ENCODE measurements at regions of chr15 and their contacts with region 1.

Region 1: GRCh38 chr15:40121911-40122638 is 13.4 kb upstream of the BMF start:
- DNase-seq: no peak
- ATAC-seq: no peak
- H3K4me3 ChIP-seq: no peak overlapping the region
- H3K4me3 Mint-ChIP-seq: no peak overlapping the region
- H3K27ac ChIP-seq: no peak overlapping the region
- H3K27ac Mint-ChIP-seq: no peak overlapping the region
- H3K4me1 ChIP-seq: no peaks in the 10 kb centered on the region
- H3K4me1 Mint-ChIP-seq: no peaks in the 10 kb centered on the region
- H3K27me3 ChIP-seq: no peaks in the 10 kb centered on the region
- H3K27me3 Mint-ChIP-seq: no peaks in the 10 kb centered on the region
- CTCF ChIP-seq: no peak

Region 2: DNA sequence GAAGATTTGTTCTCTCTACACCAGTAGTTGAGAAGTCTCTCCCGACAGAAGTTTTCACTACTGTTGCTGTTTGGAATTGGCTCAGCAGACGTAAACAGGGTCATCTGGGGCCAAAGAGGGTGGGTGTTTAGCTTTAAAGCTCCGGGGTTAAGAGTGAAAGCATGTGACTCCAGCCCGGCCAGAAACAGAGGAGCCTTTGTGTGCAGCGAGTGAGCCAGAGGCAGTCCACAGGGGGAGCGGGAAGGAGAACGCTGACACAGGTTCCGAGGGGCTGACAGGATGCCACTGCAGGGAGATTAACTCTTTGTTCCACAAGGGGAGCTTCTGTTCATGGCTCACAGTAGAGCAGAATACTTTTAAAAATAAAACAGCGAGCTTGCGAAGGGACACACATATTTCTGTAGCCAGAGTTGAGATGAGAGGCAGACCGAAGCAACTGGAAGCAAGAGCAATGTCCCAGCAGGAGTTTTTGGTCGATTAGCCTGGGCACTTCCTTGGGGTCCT is 40.3 kb before region 1 on chr15:
- CTCF ChIA-PET with region 1: no interaction called
- POLR2A ChIA-PET with region 1: no interaction called
- intact Hi-C with region 1: loop called in 1 of 2 experiments (anchors 1 kb)
- DNase-seq: no peak
- ATAC-seq: peak; percentile 42
- H3K4me3 ChIP-seq: no peak overlapping the region
- H3K4me3 Mint-ChIP-seq: peak overlapping the region; percentile 69
- H3K27ac ChIP-seq: no peak overlapping the region
- H3K27ac Mint-ChIP-seq: no peak overlapping the region
- H3K4me1 ChIP-seq: peaks cover 16% of the 10 kb centered on the region
- H3K4me1 Mint-ChIP-seq: peaks cover 25% of the 10 kb centered on the region
- H3K27me3 ChIP-seq: peaks cover 0 to 2% of the 10 kb centered on the region in 2 experiments
- H3K27me3 Mint-ChIP-seq: peaks cover 30% of the 10 kb centered on the region
- CTCF ChIP-seq: no peak

Region 3: DNA sequence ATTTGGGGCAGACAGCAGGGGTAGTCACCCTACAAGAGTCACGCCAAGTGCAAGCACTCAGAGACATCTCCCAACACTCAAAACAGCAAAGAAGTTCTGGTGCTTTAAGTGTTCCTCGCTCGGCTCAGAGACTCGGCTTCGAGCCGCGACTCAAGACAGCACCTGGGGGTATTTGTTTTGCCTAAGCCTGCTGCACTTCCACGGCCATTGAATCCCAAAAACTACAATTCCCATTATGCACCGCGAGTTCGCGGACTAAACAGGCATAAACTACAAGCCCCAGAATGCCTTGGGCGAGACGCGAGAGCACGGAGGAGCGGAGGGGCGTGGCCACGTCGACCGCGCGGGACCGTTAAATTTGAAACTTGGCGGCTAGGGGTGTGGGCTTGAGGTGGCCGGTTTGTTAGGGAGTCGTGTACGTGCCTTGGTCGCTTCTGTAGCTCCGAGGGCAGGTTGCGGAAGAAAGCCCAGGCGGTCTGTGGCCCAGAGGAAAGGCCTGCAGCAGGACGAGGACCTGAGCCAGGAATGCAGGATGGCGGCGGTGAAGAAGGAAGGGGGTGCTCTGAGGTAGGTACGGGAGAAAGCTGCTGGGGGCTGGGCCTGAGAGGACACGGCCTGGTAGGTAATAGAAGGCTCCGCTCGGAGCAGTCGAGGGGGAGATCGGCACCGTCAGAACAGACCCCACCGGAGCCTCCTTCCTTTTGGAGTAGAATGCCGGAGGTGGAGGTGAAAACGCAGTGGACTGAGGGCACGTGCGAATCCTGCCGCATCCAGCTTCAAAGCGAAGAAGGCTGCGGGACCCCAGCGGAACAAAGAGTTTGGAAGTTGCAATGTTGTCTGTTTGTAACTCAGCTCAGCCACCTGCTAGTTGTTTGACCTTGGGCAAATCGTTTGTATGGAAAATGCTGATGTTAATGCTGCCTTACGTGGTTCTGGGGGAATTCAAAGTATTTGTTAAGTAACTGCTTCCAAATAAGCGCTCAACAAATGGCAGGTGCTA is 38.9 kb after region 1 on chr15 and contains the start of gene BUB1B:
- CTCF ChIA-PET with region 1: no interaction called
- POLR2A ChIA-PET with region 1: no interaction called
- intact Hi-C with region 1: no loop called
- DNase-seq: peak; percentile 82 to 96 (median 91)
- ATAC-seq: peak; percentile 98
- H3K4me3 ChIP-seq: peak within 1 kb of the TSS; percentile 61 to 71
- H3K4me3 Mint-ChIP-seq: no peak within 1 kb of the TSS
- H3K27ac ChIP-seq: no peak within 1 kb of the TSS
- H3K27ac Mint-ChIP-seq: no peak within 1 kb of the TSS
- H3K4me1 ChIP-seq: peaks cover 10% of the 10 kb centered on the region
- H3K4me1 Mint-ChIP-seq: no peaks in the 10 kb centered on the region
- H3K27me3 ChIP-seq: no peaks in the 10 kb centered on the region
- H3K27me3 Mint-ChIP-seq: no peaks in the 10 kb centered on the region
- CTCF ChIP-seq: no peak
- total RNA-seq, gene BUB1B: 0.47 to 1.2 TPM

Region 4: DNA sequence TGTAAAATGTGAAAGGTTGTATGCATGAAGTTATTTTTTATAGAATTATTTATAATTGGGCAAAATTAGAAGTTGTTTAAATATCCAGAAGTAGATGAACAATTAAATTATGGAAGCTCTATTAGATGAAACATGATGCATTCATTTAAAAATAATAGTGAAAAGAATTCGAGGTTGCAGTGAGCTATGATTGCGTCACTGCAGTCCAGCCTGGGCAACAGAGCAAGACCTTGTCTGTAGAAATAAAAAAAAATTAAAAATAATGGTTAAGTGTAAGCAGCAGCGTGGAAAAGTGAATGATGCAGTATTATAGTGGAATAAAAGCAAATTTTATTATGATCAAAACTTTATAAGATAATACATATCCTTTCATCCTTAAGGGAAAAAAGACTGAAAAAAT is 53.1 kb after region 1 on chr15:
- CTCF ChIA-PET with region 1: no interaction called
- POLR2A ChIA-PET with region 1: no interaction called
- intact Hi-C with region 1: no loop called
- DNase-seq: no peak
- ATAC-seq: no peak
- H3K4me3 ChIP-seq: no peak overlapping the region
- H3K4me3 Mint-ChIP-seq: no peak overlapping the region
- H3K27ac ChIP-seq: no peak overlapping the region
- H3K27ac Mint-ChIP-seq: no peak overlapping the region
- H3K4me1 ChIP-seq: no peaks in the 10 kb centered on the region
- H3K4me1 Mint-ChIP-seq: no peaks in the 10 kb centered on the region
- H3K27me3 ChIP-seq: no peaks in the 10 kb centered on the region
- H3K27me3 Mint-ChIP-seq: no peaks in the 10 kb centered on the region
- CTCF ChIP-seq: no peak

Region 5: DNA sequence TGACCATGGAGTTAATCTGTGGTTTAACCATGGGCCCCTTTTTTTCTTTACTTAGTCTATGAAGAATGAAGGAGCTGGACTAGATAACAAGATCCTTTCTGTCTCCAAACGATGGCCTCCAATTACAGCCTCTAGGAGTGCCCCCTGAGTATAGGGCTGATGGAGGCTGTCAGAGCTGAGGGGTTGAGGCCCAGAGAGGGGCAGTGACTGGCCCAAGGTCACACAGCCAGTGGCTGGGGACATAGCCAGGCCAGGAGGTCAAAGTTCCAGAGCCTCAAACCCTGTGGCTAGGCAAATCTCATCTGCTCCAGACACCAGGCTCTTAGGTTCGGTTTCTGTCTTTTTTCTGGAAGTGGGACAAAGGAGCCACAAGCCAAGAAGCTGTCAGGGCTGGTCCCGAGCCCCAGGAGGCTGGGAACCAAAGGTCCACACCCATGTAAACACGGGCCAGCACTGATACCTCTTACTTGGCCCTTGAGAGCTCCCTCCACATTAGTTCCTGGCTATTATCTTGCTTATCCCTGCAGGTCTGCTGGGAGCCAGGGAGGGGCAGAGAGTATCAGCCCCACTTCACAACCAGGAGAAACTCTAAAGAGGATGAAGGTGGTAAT is 741.7 kb after region 1 on chr15:
- CTCF ChIA-PET with region 1: no interaction called
- POLR2A ChIA-PET with region 1: no interaction called
- intact Hi-C with region 1: no loop called
- DNase-seq: no peak
- ATAC-seq: no peak
- H3K4me3 ChIP-seq: no peak overlapping the region
- H3K4me3 Mint-ChIP-seq: no peak overlapping the region
- H3K27ac ChIP-seq: no peak overlapping the region
- H3K27ac Mint-ChIP-seq: no peak overlapping the region
- H3K4me1 ChIP-seq: no peaks in the 10 kb centered on the region
- H3K4me1 Mint-ChIP-seq: no peaks in the 10 kb centered on the region
- H3K27me3 ChIP-seq: no peaks in the 10 kb centered on the region
- H3K27me3 Mint-ChIP-seq: peaks cover 2% of the 10 kb centered on the region
- CTCF ChIP-seq: no peak

Measured in CD8-positive, alpha-beta T cell (primary cell).